CD8-positive, alpha-beta T cell (primary cell): ENCODE measurements at regions of chr10 and their contacts with region 1.

Region 1: GRCh38 chr10:17175551-17175950 is 25.9 kb downstream of the TRDMT1 start:
- DNase-seq: peak in 3 of 9 experiments; percentile 13 to 40 (median 37)
- ATAC-seq: no peak
- H3K4me3 ChIP-seq: peak overlapping the region; percentile 3 to 9
- H3K4me3 Mint-ChIP-seq: peak overlapping the region; percentile 69
- H3K27ac ChIP-seq: no peak overlapping the region
- H3K27ac Mint-ChIP-seq: peak overlapping the region; percentile 78
- H3K4me1 ChIP-seq: peaks cover 12% of the 10 kb centered on the region
- H3K4me1 Mint-ChIP-seq: peaks cover 13% of the 10 kb centered on the region
- H3K27me3 ChIP-seq: no peaks in the 10 kb centered on the region
- H3K27me3 Mint-ChIP-seq: no peaks in the 10 kb centered on the region
- CTCF ChIP-seq: no peak

Region 2: GRCh38 chr10:16848562-16849154 is 326.9 kb before region 1 on chr10:
- CTCF ChIA-PET with region 1: no interaction called
- POLR2A ChIA-PET with region 1: no interaction called
- intact Hi-C with region 1: loop called in 1 of 2 experiments (anchors 5 kb)
- DNase-seq: no peak
- ATAC-seq: no peak
- H3K4me3 ChIP-seq: no peak overlapping the region
- H3K4me3 Mint-ChIP-seq: no peak overlapping the region
- H3K27ac ChIP-seq: no peak overlapping the region
- H3K27ac Mint-ChIP-seq: no peak overlapping the region
- H3K4me1 ChIP-seq: no peaks in the 10 kb centered on the region
- H3K4me1 Mint-ChIP-seq: no peaks in the 10 kb centered on the region
- H3K27me3 ChIP-seq: no peaks in the 10 kb centered on the region
- H3K27me3 Mint-ChIP-seq: no peaks in the 10 kb centered on the region
- CTCF ChIP-seq: no peak

Region 3: DNA sequence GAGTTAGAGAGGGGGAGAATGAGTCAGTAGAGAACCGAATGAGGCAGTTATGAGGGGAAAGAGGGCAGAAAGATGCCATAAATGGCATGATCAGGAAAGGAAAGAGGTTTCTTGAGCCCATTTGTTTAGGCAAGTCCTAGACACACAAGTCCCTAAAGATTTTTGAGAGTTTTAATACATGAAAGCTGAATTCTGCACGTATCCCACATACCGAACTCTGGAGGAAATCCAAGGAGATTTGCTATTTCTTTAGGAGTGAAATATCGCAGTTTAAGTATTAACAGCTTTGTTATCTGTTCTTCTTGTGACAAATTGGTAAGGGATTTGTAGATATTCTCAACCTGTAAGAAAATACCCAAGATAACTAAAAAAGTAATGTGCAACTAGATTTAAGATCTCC is 22.3 kb before region 1 on chr10:
- CTCF ChIA-PET with region 1: no interaction called
- POLR2A ChIA-PET with region 1: no interaction called
- intact Hi-C with region 1: no loop called
- DNase-seq: no peak
- ATAC-seq: no peak
- H3K4me3 ChIP-seq: no peak overlapping the region
- H3K4me3 Mint-ChIP-seq: no peak overlapping the region
- H3K27ac ChIP-seq: no peak overlapping the region
- H3K27ac Mint-ChIP-seq: no peak overlapping the region
- H3K4me1 ChIP-seq: no peaks in the 10 kb centered on the region
- H3K4me1 Mint-ChIP-seq: no peaks in the 10 kb centered on the region
- H3K27me3 ChIP-seq: no peaks in the 10 kb centered on the region
- H3K27me3 Mint-ChIP-seq: no peaks in the 10 kb centered on the region
- CTCF ChIP-seq: no peak

Region 4: DNA sequence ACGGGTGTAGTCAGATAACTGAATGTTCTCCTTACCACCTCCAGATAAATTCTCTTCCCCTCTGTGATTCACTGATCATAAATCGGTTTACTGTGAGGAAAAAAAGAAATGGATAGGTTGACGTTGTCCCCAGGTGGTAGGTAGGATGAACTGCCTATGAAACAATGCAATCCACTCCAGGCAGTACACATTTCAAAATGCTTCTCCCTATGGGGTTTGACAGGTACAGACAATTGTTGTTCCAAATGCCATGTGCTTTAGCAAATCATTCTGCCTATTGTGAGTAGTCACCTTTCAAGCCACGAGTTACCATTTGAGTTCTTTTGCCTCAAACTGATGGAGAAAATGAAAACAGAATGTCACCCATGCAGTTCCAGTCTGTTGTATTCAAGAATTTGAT is 74.3 kb after region 1 on chr10:
- CTCF ChIA-PET with region 1: no interaction called
- POLR2A ChIA-PET with region 1: no interaction called
- intact Hi-C with region 1: no loop called
- DNase-seq: peak in 2 of 9 experiments; percentile 40 to 55
- ATAC-seq: peak; percentile 62
- H3K4me3 ChIP-seq: no peak overlapping the region
- H3K4me3 Mint-ChIP-seq: no peak overlapping the region
- H3K27ac ChIP-seq: no peak overlapping the region
- H3K27ac Mint-ChIP-seq: no peak overlapping the region
- H3K4me1 ChIP-seq: no peaks in the 10 kb centered on the region
- H3K4me1 Mint-ChIP-seq: no peaks in the 10 kb centered on the region
- H3K27me3 ChIP-seq: no peaks in the 10 kb centered on the region
- H3K27me3 Mint-ChIP-seq: no peaks in the 10 kb centered on the region
- CTCF ChIP-seq: peak; percentile 36